Activated CD4-positive, alpha-beta T cell treated with anti-CD3 and anti-CD28 coated beads, Interleukin-2, amount 10 ng/mL, durations not matched to agents 7 days and 5 days (primary cell): ENCODE measurements at regions of chr9 and their contacts with region 1.

Region 1: GRCh38 chr9:34084562-34084961 is 35.9 kb upstream of the UBAP2 start:
- DNase-seq: no peak
- H3K4me3 Mint-ChIP-seq: no peak overlapping the region
- H3K27ac Mint-ChIP-seq: peak overlapping the region; percentile 6
- H3K4me1 Mint-ChIP-seq: peaks cover 4% of the 10 kb centered on the region
- H3K27me3 Mint-ChIP-seq: no peaks in the 10 kb centered on the region

Region 2: DNA sequence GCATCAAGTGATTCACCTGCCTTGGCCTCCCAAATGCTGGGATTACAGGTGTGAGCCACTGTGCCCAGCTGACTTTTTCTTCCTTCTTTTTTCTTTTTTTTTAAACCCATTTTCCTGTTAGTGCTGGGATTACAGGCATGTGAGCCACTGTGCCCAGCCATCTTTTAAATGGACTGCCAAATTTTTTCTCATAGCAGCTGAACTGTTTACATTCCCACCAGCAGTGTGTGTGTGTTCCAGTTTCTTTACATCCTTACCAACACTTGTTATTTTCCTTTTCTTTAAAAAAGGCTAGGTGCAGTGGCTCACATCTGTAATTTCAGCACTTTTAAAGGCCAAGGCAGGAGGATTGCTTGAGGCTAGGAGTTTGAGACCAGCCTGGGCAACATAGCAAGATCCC is 190.7 kb before region 1 on chr9:
- CTCF ChIA-PET with region 1: no interaction called
- POLR2A ChIA-PET with region 1: no interaction called
- DNase-seq: no peak
- H3K4me3 Mint-ChIP-seq: no peak overlapping the region
- H3K27ac Mint-ChIP-seq: peak overlapping the region; percentile 25
- H3K4me1 Mint-ChIP-seq: no peaks in the 10 kb centered on the region
- H3K27me3 Mint-ChIP-seq: no peaks in the 10 kb centered on the region

Region 3: GRCh38 chr9:34072868-34073590 is 11.5 kb before region 1 on chr9:
- CTCF ChIA-PET with region 1: interaction called, 11 read pairs
- POLR2A ChIA-PET with region 1: no interaction called
- DNase-seq: no peak
- H3K4me3 Mint-ChIP-seq: no peak overlapping the region
- H3K27ac Mint-ChIP-seq: no peak overlapping the region
- H3K4me1 Mint-ChIP-seq: peaks cover 11% of the 10 kb centered on the region
- H3K27me3 Mint-ChIP-seq: no peaks in the 10 kb centered on the region

Region 4: GRCh38 chr9:34218446-34218845 is 133.9 kb after region 1 on chr9:
- CTCF ChIA-PET with region 1: no interaction called
- POLR2A ChIA-PET with region 1: no interaction called
- DNase-seq: no peak
- H3K4me3 Mint-ChIP-seq: no peak overlapping the region
- H3K27ac Mint-ChIP-seq: no peak overlapping the region
- H3K4me1 Mint-ChIP-seq: peaks cover 3% of the 10 kb centered on the region
- H3K27me3 Mint-ChIP-seq: no peaks in the 10 kb centered on the region

Region 5: GRCh38 chr9:34233672-34234071 is 149.1 kb after region 1 on chr9:
- CTCF ChIA-PET with region 1: no interaction called
- POLR2A ChIA-PET with region 1: no interaction called
- DNase-seq: no peak
- H3K4me3 Mint-ChIP-seq: no peak overlapping the region
- H3K27ac Mint-ChIP-seq: no peak overlapping the region
- H3K4me1 Mint-ChIP-seq: no peaks in the 10 kb centered on the region
- H3K27me3 Mint-ChIP-seq: no peaks in the 10 kb centered on the region